ENCODE measurements at regions of chr19 and their contacts with region 1.

Region 1: GRCh38 chr19:39445265-39446111 is at the start of gene SUPT5H:
- DNase-seq: peak; percentile 99
- ATAC-seq: peak; percentile 94
- H3K4me3 Mint-ChIP-seq: peak within 1 kb of the TSS; percentile 100
- H3K27ac Mint-ChIP-seq: peak within 1 kb of the TSS; percentile 99
- H3K4me1 Mint-ChIP-seq: peaks cover 52% of the 10 kb centered on the region
- H3K27me3 Mint-ChIP-seq: no peaks in the 10 kb centered on the region
- total RNA-seq, gene SUPT5H: 144 to 181 TPM

Region 2: GRCh38 chr19:39474139-39474622 is 28.7 kb after region 1 on chr19:
- CTCF ChIA-PET with region 1: interaction called, 16 read pairs
- DNase-seq: peak; percentile 67
- ATAC-seq: peak; percentile 83
- H3K4me3 Mint-ChIP-seq: no peak overlapping the region
- H3K27ac Mint-ChIP-seq: no peak overlapping the region
- H3K4me1 Mint-ChIP-seq: peaks cover 11% of the 10 kb centered on the region
- H3K27me3 Mint-ChIP-seq: no peaks in the 10 kb centered on the region

Region 3: GRCh38 chr19:39502640-39503417 is 57.3 kb after region 1 on chr19:
- CTCF ChIA-PET with region 1: interaction called, 13 read pairs
- DNase-seq: peak; percentile 76
- ATAC-seq: peak; percentile 71
- H3K4me3 Mint-ChIP-seq: no peak overlapping the region
- H3K27ac Mint-ChIP-seq: no peak overlapping the region
- H3K4me1 Mint-ChIP-seq: peaks cover 30% of the 10 kb centered on the region
- H3K27me3 Mint-ChIP-seq: peaks cover 68% of the 10 kb centered on the region

Region 4: GRCh38 chr19:39671738-39672363 is 226.4 kb after region 1 on chr19:
- CTCF ChIA-PET with region 1: interaction called, 10 read pairs
- DNase-seq: peak; percentile 64
- ATAC-seq: peak; percentile 65
- H3K4me3 Mint-ChIP-seq: no peak overlapping the region
- H3K27ac Mint-ChIP-seq: no peak overlapping the region
- H3K4me1 Mint-ChIP-seq: peaks cover 31% of the 10 kb centered on the region
- H3K27me3 Mint-ChIP-seq: peaks cover 27% of the 10 kb centered on the region

Measured in activated CD8-positive, alpha-beta memory T cell treated with anti-CD3 and anti-CD28 coated beads, Interleukin-2, amount 10 ng/mL, durations not matched to agents 7 days and 5 days (primary cell).